WTC11 (cell line): ENCODE measurements at regions of chr19 and their contacts with region 1.

Region 1: GRCh38 chr19:16025108-16026101 is 50.9 kb upstream of the TPM4 start:
- DNase-seq: peak; percentile 67
- ATAC-seq: peak; percentile 96
- H3K4me3 Mint-ChIP-seq: no peak overlapping the region
- H3K27ac Mint-ChIP-seq: no peak overlapping the region
- H3K4me1 Mint-ChIP-seq: no peaks in the 10 kb centered on the region
- H3K27me3 Mint-ChIP-seq: no peaks in the 10 kb centered on the region
- CTCF ChIP-seq: 0 out of 2 replicates have a peak, but pooled peaks have one; percentile 19

Region 2: GRCh38 chr19:15836595-15837337 is 188.6 kb before region 1 on chr19:
- CTCF ChIA-PET with region 1: no interaction called
- POLR2A ChIA-PET with region 1: no interaction called
- DNase-seq: peak; percentile 89
- ATAC-seq: peak; percentile 92
- H3K4me3 Mint-ChIP-seq: peak overlapping the region; percentile 83
- H3K27ac Mint-ChIP-seq: peak overlapping the region; percentile 97
- H3K4me1 Mint-ChIP-seq: peaks cover 21% of the 10 kb centered on the region
- H3K27me3 Mint-ChIP-seq: peaks cover 11% of the 10 kb centered on the region
- CTCF ChIP-seq: no peak

Region 3: DNA sequence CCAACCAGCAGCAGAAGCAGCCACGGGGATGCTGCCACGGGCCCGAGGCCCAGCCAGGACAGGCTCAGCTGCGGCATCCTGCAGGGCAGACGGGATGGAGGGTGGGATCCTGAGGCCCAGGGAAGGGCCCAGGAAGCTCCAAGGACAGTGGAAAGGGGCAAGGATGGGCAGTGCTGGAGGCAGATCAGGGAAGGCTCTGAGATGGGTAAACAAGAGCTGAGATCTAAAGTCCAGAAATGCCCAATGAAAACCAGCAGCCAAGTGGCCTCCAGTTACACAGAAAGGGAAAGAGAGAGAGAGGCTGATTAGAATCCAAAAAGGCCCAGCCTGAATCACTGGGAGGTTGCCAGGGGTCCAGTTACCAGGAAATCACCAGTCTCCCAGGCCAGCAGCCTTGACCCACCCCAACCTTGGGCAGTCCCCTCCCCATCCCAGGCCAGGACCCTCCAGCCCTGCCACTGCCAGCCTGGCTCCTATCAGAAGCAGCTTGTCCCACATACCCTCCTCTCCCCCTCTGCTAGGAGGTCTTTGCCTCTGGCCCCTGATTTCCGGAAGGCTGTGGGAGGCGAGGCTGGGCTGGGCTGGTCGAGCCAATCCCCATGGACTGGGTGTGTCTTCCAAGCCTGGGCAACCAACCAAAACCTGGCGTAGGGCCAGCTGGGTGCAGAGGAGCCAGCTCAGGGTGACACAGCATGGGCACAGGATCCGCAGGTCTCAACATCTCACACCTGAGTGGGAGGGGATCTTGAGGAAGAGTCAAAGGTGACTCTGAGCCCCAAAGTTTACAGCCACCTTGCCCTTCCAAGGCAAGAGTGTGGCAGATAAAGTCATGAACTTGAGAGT is 90.9 kb before region 1 on chr19 and contains the start of gene CYP4F11:
- CTCF ChIA-PET with region 1: no interaction called
- POLR2A ChIA-PET with region 1: no interaction called
- DNase-seq: no peak
- ATAC-seq: no peak
- H3K4me3 Mint-ChIP-seq: peak within 1 kb of the TSS; percentile 14; the same call in 1 of the 2 replicates
- H3K27ac Mint-ChIP-seq: no peak within 1 kb of the TSS
- H3K4me1 Mint-ChIP-seq: no peaks in the 10 kb centered on the region
- H3K27me3 Mint-ChIP-seq: peaks cover 56% of the 10 kb centered on the region
- CTCF ChIP-seq: no peak
- total RNA-seq, gene CYP4F11: 0.07 TPM in 1 of 3 replicates, not detected in the others

Region 4: GRCh38 chr19:15971222-15971780 is 54.1 kb before region 1 on chr19:
- CTCF ChIA-PET with region 1: no interaction called
- POLR2A ChIA-PET with region 1: no interaction called
- DNase-seq: no peak
- ATAC-seq: no peak
- H3K4me3 Mint-ChIP-seq: no peak overlapping the region
- H3K27ac Mint-ChIP-seq: no peak overlapping the region
- H3K4me1 Mint-ChIP-seq: no peaks in the 10 kb centered on the region
- H3K27me3 Mint-ChIP-seq: peaks cover 24% of the 10 kb centered on the region
- CTCF ChIP-seq: no peak

Region 5: GRCh38 chr19:15995536-15995935 is 29.9 kb before region 1 on chr19:
- CTCF ChIA-PET with region 1: no interaction called
- POLR2A ChIA-PET with region 1: no interaction called
- DNase-seq: no peak
- ATAC-seq: no peak
- H3K4me3 Mint-ChIP-seq: no peak overlapping the region
- H3K27ac Mint-ChIP-seq: no peak overlapping the region
- H3K4me1 Mint-ChIP-seq: no peaks in the 10 kb centered on the region
- H3K27me3 Mint-ChIP-seq: peaks cover 19% of the 10 kb centered on the region
- CTCF ChIP-seq: no peak

Region 6: GRCh38 chr19:16014923-16015804 is 10.2 kb before region 1 on chr19:
- CTCF ChIA-PET with region 1: interaction called, 10 read pairs
- POLR2A ChIA-PET with region 1: no interaction called
- DNase-seq: no peak
- ATAC-seq: no peak
- H3K4me3 Mint-ChIP-seq: no peak overlapping the region
- H3K27ac Mint-ChIP-seq: no peak overlapping the region
- H3K4me1 Mint-ChIP-seq: no peaks in the 10 kb centered on the region
- H3K27me3 Mint-ChIP-seq: no peaks in the 10 kb centered on the region
- CTCF ChIP-seq: no peak

Region 7: GRCh38 chr19:16041299-16041990 is 16.0 kb after region 1 on chr19:
- CTCF ChIA-PET with region 1: interaction called, 20 read pairs
- POLR2A ChIA-PET with region 1: no interaction called
- DNase-seq: peak; percentile 93
- ATAC-seq: peak; percentile 96
- H3K4me3 Mint-ChIP-seq: peak overlapping the region; percentile 38
- H3K27ac Mint-ChIP-seq: no peak overlapping the region
- H3K4me1 Mint-ChIP-seq: 0 out of 2 replicates have a peak, but pooled peaks cover 3% of the 10 kb centered on the region
- H3K27me3 Mint-ChIP-seq: peaks cover 8% of the 10 kb centered on the region
- CTCF ChIP-seq: peak; percentile 97

Region 8: GRCh38 chr19:16111160-16111908 is 85.9 kb after region 1 on chr19 and contains the start of gene RAB8A:
- CTCF ChIA-PET with region 1: interaction called, 10 read pairs
- POLR2A ChIA-PET with region 1: no interaction called
- DNase-seq: peak; percentile 97
- ATAC-seq: peak; percentile 95
- H3K4me3 Mint-ChIP-seq: peak within 1 kb of the TSS; percentile 96
- H3K27ac Mint-ChIP-seq: peak within 1 kb of the TSS; percentile 96
- H3K4me1 Mint-ChIP-seq: peaks cover 13% of the 10 kb centered on the region
- H3K27me3 Mint-ChIP-seq: peaks cover 2% of the 10 kb centered on the region; the same call in 1 of the 2 replicates
- CTCF ChIP-seq: peak; percentile 86
- total RNA-seq, gene RAB8A: 68.4 to 81.8 TPM (median 74.0 TPM) in 3 replicates